Breast epithelium (tissue), 4 donors: ENCODE measurements at regions of chr2 and their contacts with region 1.

Region 1: GRCh38 chr2:190043441-190043840 is 19.1 kb downstream of the MSTN start:
- DNase-seq: no peak
- H3K4me3 ChIP-seq: no peak overlapping the region
- H3K27ac ChIP-seq: no peak overlapping the region
- H3K4me1 ChIP-seq: no peaks in the 10 kb centered on the region
- H3K27me3 ChIP-seq: no peaks in the 10 kb centered on the region
- CTCF ChIP-seq: no peak
- POLR2A ChIP-seq: no peak

Region 2: DNA sequence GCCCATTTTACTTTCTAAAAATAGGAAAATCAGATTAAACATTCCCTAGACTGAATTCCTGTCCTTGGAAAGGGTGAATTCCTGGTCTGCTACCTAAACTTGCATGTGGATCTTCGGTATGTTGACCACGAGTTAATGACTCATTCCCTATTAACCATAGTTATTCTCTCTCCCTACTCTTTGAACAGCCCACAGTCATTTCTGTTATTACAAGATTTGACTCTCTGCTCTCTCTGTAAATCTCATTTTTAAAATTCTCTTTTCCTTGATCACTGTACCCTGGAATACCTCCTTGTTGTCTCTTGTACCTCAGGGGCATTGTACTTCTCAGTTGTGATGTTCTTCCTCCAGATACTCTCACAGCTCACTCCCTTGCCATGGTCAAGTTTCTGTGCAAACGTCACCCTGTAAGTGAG is 1843.7 kb before region 1 on chr2:
- intact Hi-C with region 1: loop called (anchors 10 kb)
- DNase-seq: no peak
- H3K4me3 ChIP-seq: no peak overlapping the region
- H3K27ac ChIP-seq: no peak overlapping the region
- H3K4me1 ChIP-seq: no peaks in the 10 kb centered on the region
- H3K27me3 ChIP-seq: no peaks in the 10 kb centered on the region
- CTCF ChIP-seq: no peak
- POLR2A ChIP-seq: no peak

Region 3: DNA sequence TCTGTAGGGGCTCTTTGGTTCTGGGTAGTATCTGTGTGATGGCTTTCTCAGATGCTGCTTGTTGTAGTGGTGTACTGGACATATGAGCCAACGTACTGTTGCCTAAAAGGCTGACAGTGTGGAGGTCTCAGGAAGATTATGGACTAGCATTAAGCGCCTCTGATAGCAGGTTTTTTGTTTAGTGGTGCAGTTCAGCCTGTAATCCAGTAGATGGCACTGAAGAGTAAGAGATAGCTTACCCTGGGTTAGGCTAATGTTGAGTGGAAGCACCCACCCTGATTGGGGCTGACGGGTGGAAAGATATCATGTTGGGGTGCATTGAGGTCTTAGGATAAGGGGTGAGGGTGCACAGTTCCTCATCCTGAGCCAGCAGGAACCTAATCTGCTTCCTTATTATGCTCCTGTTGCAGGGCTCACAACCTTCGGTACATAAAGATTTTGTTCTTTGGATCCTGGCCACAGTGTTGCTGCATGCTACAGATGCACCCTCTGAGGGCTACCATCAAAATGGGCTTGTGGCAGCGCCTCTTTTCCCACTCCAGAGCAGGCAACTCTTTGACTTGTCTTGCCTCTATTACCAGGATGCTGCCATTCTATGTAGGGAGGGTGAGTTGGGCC is 60.6 kb before region 1 on chr2:
- intact Hi-C with region 1: no loop called
- DNase-seq: no peak
- H3K4me3 ChIP-seq: no peak overlapping the region
- H3K27ac ChIP-seq: no peak overlapping the region
- H3K4me1 ChIP-seq: no peaks in the 10 kb centered on the region
- H3K27me3 ChIP-seq: no peaks in the 10 kb centered on the region
- CTCF ChIP-seq: no peak
- POLR2A ChIP-seq: no peak